Naive thymus-derived CD4-positive, alpha-beta T cell (primary cell): ENCODE measurements at regions of chr7 and their contacts with region 1.

Region 1: DNA sequence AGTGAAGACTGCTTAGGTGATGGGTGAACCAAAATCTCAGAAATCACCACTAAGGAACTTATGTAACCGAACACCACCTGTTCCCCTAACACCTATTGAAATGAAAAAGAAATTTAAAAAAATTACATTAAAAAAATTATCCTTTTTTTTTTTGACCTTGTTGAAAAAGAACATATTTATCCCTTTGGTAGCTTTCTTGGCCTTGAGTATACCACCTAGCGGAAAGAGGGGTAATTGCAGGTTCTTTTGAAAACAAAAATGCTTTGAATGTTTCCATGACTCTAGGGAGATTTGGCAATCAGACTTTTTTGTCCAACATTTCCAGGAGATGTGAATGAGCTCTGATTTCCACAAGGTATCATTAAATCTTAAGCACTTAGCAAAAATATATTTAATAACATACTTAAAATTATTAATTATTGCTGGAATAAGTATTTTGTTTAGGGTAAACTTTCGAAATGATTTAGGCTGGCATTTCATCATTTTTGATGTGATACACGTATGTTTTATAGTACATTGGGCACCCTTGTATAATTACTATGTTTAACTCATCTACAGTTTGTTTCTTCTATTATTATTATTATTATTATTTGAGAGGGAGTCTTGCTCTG is 47.0 kb upstream of the ELMO1 start:
- DNase-seq: peak in 6 of 9 donors; percentile 16 to 46 (median 36)
- ATAC-seq: peak; percentile 60
- H3K4me3 ChIP-seq: no peak overlapping the region
- H3K4me3 Mint-ChIP-seq: no peak overlapping the region
- H3K27ac ChIP-seq: no peak overlapping the region
- H3K27ac Mint-ChIP-seq: no peak overlapping the region
- H3K4me1 ChIP-seq: no peaks in the 10 kb centered on the region
- H3K4me1 Mint-ChIP-seq: peaks cover 0 to 6% (median 0%) of the 10 kb centered on the region in 7 donors
- H3K27me3 ChIP-seq: no peaks in the 10 kb centered on the region
- H3K27me3 Mint-ChIP-seq: no peaks in the 10 kb centered on the region

Region 2: DNA sequence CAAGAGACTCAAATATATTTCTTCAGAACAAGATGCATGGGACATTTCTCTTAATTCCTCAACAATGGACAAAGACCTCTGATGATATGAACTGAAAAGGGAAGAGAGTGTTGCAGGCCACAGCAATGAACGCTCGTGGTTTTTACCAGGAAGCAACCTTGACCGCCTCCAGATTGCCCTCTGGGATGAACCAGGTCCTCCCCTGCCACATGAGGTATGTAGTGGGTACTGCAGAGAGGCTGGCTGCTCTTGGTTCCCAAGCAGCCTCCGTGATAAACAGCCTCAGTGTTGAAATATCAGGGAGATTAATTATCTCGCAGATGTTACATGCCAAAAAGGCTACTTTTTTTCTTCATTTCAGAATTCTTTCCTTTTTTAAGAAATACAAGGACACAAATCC is 385.8 kb before region 1 on chr7:
- CTCF ChIA-PET with region 1: no interaction called
- POLR2A ChIA-PET with region 1: no interaction called
- intact Hi-C with region 1: no loop called
- DNase-seq: no peak
- ATAC-seq: no peak
- H3K4me3 ChIP-seq: no peak overlapping the region
- H3K4me3 Mint-ChIP-seq: peak overlapping the region in 1 of 10 donors; percentile 14
- H3K27ac ChIP-seq: no peak overlapping the region
- H3K27ac Mint-ChIP-seq: peak overlapping the region in 1 of 9 donors; percentile 25
- H3K4me1 ChIP-seq: no peaks in the 10 kb centered on the region
- H3K4me1 Mint-ChIP-seq: peaks cover 28 to 76% (median 67%) of the 10 kb centered on the region in 7 donors
- H3K27me3 ChIP-seq: no peaks in the 10 kb centered on the region
- H3K27me3 Mint-ChIP-seq: no peaks in the 10 kb centered on the region

Region 3: DNA sequence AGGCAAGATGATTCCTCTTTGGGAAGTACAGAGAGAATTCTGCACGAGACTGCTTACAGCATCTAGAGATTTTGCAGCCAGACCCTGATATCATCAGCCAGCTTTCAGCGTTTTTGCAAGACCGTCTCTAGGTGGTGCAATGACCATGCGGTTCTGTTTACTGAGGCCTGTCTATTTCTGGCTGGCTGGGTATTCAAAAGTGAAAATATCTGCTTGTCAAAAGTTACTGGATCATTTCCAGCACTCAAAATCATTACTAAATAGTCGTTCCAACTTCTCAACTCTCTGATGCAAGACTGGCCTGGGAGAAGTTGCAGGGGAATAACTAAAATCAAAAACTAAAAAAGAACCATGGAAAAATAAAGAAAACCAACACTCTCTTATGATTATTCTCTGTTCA is 287.2 kb before region 1 on chr7:
- CTCF ChIA-PET with region 1: interaction called, 4 read pairs
- POLR2A ChIA-PET with region 1: no interaction called
- intact Hi-C with region 1: loop called (anchors 1 kb)
- DNase-seq: peak in 7 of 9 donors; percentile 17 to 56 (median 33)
- ATAC-seq: peak; percentile 77
- H3K4me3 ChIP-seq: no peak overlapping the region
- H3K4me3 Mint-ChIP-seq: no peak overlapping the region
- H3K27ac ChIP-seq: no peak overlapping the region
- H3K27ac Mint-ChIP-seq: peak overlapping the region; percentile 25 to 89 (median 71)
- H3K4me1 ChIP-seq: no peaks in the 10 kb centered on the region
- H3K4me1 Mint-ChIP-seq: peaks cover 0 to 17% (median 8%) of the 10 kb centered on the region in 7 donors
- H3K27me3 ChIP-seq: no peaks in the 10 kb centered on the region
- H3K27me3 Mint-ChIP-seq: no peaks in the 10 kb centered on the region

Region 4: GRCh38 chr7:37234928-37235327 is 260.8 kb before region 1 on chr7:
- CTCF ChIA-PET with region 1: interaction called, 28 read pairs
- POLR2A ChIA-PET with region 1: no interaction called
- intact Hi-C with region 1: loop called (anchors 1 kb)
- DNase-seq: peak in 6 of 9 donors; percentile 13 to 45 (median 33)
- ATAC-seq: peak; percentile 32
- H3K4me3 ChIP-seq: no peak overlapping the region
- H3K4me3 Mint-ChIP-seq: no peak overlapping the region
- H3K27ac ChIP-seq: no peak overlapping the region
- H3K27ac Mint-ChIP-seq: peak overlapping the region in 2 of 9 donors; percentile 1 to 10
- H3K4me1 ChIP-seq: no peaks in the 10 kb centered on the region
- H3K4me1 Mint-ChIP-seq: peaks cover 12 to 33% (median 24%) of the 10 kb centered on the region in 7 donors
- H3K27me3 ChIP-seq: no peaks in the 10 kb centered on the region
- H3K27me3 Mint-ChIP-seq: no peaks in the 10 kb centered on the region

Region 5: DNA sequence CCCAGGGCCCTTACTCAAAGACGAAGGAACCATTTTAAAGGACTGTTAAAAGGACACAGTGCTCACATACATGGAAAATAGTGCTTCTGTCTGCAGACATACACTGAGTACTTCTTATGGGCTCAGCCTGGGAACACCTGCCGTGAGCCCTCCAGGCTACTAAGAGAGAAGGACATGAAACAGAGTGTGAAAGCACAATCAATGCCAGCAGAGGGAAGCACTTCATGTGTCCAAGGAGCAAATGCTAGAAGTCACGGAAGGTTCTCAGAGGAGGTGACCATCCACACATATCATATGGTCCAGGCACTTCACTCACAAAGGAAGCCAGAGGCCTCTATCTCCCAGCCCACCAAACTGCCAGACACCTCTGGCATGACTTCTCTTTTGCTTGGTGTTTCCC is 62.5 kb before region 1 on chr7:
- CTCF ChIA-PET with region 1: no interaction called
- POLR2A ChIA-PET with region 1: no interaction called
- intact Hi-C with region 1: loop called in 1 of 2 experiments (anchors 1 kb)
- DNase-seq: no peak
- ATAC-seq: peak; percentile 49
- H3K4me3 ChIP-seq: no peak overlapping the region
- H3K4me3 Mint-ChIP-seq: peak overlapping the region in 8 of 10 donors; percentile 30 to 69 (median 64)
- H3K27ac ChIP-seq: no peak overlapping the region
- H3K27ac Mint-ChIP-seq: peak overlapping the region in 8 of 9 donors; percentile 19 to 87 (median 64)
- H3K4me1 ChIP-seq: peaks cover 12 to 35% of the 10 kb centered on the region in 2 donors
- H3K4me1 Mint-ChIP-seq: peaks cover 54 to 92% (median 81%) of the 10 kb centered on the region in 7 donors
- H3K27me3 ChIP-seq: no peaks in the 10 kb centered on the region
- H3K27me3 Mint-ChIP-seq: no peaks in the 10 kb centered on the region

Region 6: GRCh38 chr7:37516610-37517108 is 21.0 kb after region 1 on chr7:
- CTCF ChIA-PET with region 1: no interaction called
- POLR2A ChIA-PET with region 1: no interaction called
- intact Hi-C with region 1: no loop called
- DNase-seq: no peak
- ATAC-seq: no peak
- H3K4me3 ChIP-seq: no peak overlapping the region
- H3K4me3 Mint-ChIP-seq: no peak overlapping the region
- H3K27ac ChIP-seq: no peak overlapping the region
- H3K27ac Mint-ChIP-seq: no peak overlapping the region
- H3K4me1 ChIP-seq: no peaks in the 10 kb centered on the region
- H3K4me1 Mint-ChIP-seq: peaks cover 0 to 2% (median 0%) of the 10 kb centered on the region in 7 donors
- H3K27me3 ChIP-seq: no peaks in the 10 kb centered on the region
- H3K27me3 Mint-ChIP-seq: peaks cover 0 to 22% (median 6%) of the 10 kb centered on the region in 5 donors

Region 7: DNA sequence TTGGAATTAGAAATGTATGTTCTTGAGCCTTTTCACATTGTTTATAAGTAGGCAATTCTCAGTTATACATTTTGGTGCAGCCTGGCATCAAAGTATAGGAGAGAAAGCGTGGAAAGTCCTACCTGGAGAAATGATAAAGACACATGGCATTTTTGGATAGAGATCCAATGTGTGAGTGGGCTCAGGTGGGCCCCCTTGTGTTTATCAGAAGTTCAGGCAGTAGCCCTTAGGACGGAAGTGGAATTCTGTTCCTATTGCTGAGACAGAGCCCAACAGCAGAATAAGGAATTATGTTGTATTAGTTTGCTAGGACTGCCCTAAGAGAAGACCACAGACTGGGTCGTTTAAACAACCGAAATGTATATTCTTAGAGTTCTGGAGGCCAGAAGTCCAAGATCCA is 1220.7 kb after region 1 on chr7:
- CTCF ChIA-PET with region 1: no interaction called
- POLR2A ChIA-PET with region 1: no interaction called
- intact Hi-C with region 1: no loop called
- DNase-seq: no peak
- ATAC-seq: no peak
- H3K4me3 ChIP-seq: no peak overlapping the region
- H3K4me3 Mint-ChIP-seq: no peak overlapping the region
- H3K27ac ChIP-seq: no peak overlapping the region
- H3K27ac Mint-ChIP-seq: no peak overlapping the region
- H3K4me1 ChIP-seq: no peaks in the 10 kb centered on the region
- H3K4me1 Mint-ChIP-seq: no peaks in the 10 kb centered on the region
- H3K27me3 ChIP-seq: no peaks in the 10 kb centered on the region
- H3K27me3 Mint-ChIP-seq: peaks cover 3 to 14% (median 4%) of the 10 kb centered on the region in 5 donors